ENCODE measurements at regions of chr2 and their contacts with region 1.

Region 1: GRCh38 chr2:14903709-14904374 is 271.3 kb downstream of the LRATD1 start:
- DNase-seq: peak; percentile 82
- CTCF ChIP-seq: peak; percentile 91

Region 2: DNA sequence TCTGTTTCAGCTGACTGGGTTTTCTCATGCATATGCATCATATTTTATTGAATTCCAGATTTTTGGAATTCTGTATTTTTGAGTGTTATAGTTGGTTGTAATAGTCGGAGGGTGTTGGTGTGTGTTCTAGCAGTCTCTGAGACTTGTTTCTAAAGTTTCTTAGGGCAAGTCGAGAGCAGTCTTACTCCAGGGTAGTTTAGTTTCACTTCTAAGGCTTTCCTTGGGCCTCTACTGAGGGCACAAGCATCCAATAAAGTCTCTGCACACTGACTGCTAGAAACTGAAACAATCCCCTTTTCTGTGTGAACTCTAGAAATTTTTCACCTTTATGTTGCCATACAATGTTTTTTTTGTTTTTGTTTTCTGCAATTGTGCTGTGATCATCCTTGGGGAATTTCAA is 935.0 kb before region 1 on chr2:
- in situ Hi-C with region 1: no loop called
- DNase-seq: no peak
- CTCF ChIP-seq: no peak

Region 3: DNA sequence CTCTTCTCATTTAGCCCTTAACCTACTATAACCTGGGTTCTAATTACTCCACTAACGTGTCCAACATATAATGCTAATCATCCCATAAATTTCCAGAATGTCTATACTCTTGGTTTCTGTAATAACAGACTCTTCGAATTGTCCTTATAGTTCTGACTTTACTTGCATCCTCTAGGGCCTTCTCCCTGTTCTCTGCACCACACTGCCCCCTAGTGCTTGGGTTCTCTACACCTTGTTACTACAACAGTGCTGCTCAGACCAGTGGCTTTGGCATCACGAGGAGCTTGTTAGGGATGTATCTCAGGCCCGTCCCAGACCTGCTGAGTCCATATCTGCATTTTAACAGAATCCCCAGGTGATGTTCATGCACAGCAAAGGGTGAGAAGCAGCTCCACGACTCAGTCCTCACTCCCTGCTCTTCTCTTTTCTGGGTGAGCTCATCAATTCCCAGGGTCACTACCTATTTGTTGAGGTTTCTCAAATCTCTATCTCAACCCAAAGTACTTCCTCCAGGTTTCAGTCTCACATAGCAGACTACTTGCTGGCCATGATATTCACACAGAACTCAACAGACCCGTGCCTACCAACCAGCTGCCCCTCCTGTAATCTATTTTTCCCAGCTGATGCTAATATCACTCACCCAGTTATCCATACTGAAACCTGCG is 673.4 kb after region 1 on chr2:
- in situ Hi-C with region 1: loop called (anchors 25 kb)
- DNase-seq: peak; percentile 65
- CTCF ChIP-seq: peak; percentile 84

Measured in GM13976 (cell line).